Cardiac septum (tissue), 1 donor: ENCODE measurements at regions of chr13 and their contacts with region 1.

Region 1: GRCh38 chr13:110306960-110307746 is at the starts of genes COL4A1 and COL4A2:
- DNase-seq: peak; percentile 88
- total RNA-seq, gene COL4A1: 196 TPM
- total RNA-seq, gene COL4A2: 165 TPM

Region 2: GRCh38 chr13:110233181-110233950 is 73.8 kb before region 1 on chr13:
- intact Hi-C with region 1: loop called (anchors 5 kb)
- DNase-seq: no peak

Region 3: GRCh38 chr13:110258876-110259631 is 48.1 kb before region 1 on chr13:
- intact Hi-C with region 1: no loop called
- DNase-seq: no peak